ENCODE measurements at regions of chr6 and their contacts with region 1.

Region 1: DNA sequence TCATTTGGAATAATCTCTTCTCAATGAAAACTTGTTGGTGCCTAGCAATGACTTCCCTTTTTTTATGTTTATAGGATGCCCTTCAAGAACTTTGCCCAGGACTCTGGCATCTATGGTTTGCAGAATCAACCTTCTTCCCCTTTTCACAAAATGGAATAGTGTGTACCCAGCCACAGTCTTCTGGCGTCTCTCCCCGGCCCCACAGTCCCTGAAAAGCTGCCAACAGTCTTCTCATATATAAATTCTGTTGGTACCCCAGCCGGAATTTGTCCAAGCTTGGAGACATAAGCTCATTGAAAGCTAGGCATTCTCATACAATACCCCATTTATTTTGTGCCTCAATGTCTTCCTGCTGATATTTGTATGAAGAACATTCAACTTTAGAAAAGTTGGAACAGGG is 26.4 kb upstream of the MCM3 start:
- DNase-seq: no peak
- ATAC-seq: no peak
- H3K4me3 Mint-ChIP-seq: no peak overlapping the region
- H3K27ac Mint-ChIP-seq: no peak overlapping the region
- H3K4me1 Mint-ChIP-seq: peaks cover 41% of the 10 kb centered on the region
- H3K27me3 Mint-ChIP-seq: no peaks in the 10 kb centered on the region
- CTCF ChIP-seq: no peak

Region 2: GRCh38 chr6:52233975-52234823 is 76.7 kb before region 1 on chr6:
- CTCF ChIA-PET with region 1: no interaction called
- POLR2A ChIA-PET with region 1: no interaction called
- intact Hi-C with region 1: no loop called
- DNase-seq: no peak
- ATAC-seq: no peak
- H3K4me3 Mint-ChIP-seq: no peak overlapping the region
- H3K27ac Mint-ChIP-seq: no peak overlapping the region
- H3K4me1 Mint-ChIP-seq: no peaks in the 10 kb centered on the region
- H3K27me3 Mint-ChIP-seq: peaks cover 3% of the 10 kb centered on the region
- CTCF ChIP-seq: no peak

Region 3: DNA sequence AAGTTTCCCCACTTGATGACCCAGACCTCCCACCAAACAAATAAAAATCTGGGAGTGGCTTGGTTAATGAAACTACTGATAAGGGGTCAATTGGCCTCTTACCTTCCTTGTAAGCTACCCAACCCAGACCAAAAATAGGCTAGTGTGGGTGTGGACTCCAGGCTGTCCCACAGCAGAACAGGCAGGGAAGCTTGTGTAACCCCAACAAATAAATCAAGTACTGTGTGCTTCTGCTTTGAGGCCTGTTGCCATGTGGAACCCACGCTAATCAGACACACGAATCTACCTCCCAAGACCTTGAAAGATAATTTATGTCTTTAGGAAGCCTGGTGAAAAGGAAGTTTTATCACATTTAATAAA is 17.4 kb after region 1 on chr6:
- CTCF ChIA-PET with region 1: no interaction called
- POLR2A ChIA-PET with region 1: no interaction called
- intact Hi-C with region 1: loop called (anchors 2 kb)
- DNase-seq: no peak
- ATAC-seq: no peak
- H3K4me3 Mint-ChIP-seq: no peak overlapping the region
- H3K27ac Mint-ChIP-seq: no peak overlapping the region
- H3K4me1 Mint-ChIP-seq: peaks cover 11% of the 10 kb centered on the region
- H3K27me3 Mint-ChIP-seq: no peaks in the 10 kb centered on the region
- CTCF ChIP-seq: no peak

Region 4: DNA sequence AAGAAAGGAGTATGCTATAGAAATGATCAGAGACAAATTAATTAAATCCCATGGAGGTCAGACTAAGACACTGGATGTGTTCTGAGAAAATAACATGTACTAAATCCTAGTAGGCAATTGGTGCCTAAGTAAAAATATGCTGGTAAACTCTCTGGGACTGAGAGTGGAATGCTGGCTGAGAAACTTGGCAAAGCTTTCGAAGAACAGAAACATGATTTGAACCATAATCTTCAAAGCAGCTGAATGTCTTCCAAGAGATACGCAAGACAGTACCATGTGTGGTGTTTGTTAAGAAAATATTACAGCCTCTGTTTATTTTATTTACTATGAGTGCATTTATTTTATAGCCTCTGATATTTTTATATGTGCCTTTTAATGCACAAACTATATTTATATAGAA is 164.4 kb after region 1 on chr6:
- CTCF ChIA-PET with region 1: no interaction called
- POLR2A ChIA-PET with region 1: no interaction called
- intact Hi-C with region 1: no loop called
- DNase-seq: no peak
- ATAC-seq: no peak
- H3K4me3 Mint-ChIP-seq: no peak overlapping the region
- H3K27ac Mint-ChIP-seq: no peak overlapping the region
- H3K4me1 Mint-ChIP-seq: peaks cover 2% of the 10 kb centered on the region
- H3K27me3 Mint-ChIP-seq: no peaks in the 10 kb centered on the region
- CTCF ChIP-seq: no peak